Sciatic nerve (tissue), 2 donors: ENCODE measurements at regions of chr7 and their contacts with region 1.

Region 1: DNA sequence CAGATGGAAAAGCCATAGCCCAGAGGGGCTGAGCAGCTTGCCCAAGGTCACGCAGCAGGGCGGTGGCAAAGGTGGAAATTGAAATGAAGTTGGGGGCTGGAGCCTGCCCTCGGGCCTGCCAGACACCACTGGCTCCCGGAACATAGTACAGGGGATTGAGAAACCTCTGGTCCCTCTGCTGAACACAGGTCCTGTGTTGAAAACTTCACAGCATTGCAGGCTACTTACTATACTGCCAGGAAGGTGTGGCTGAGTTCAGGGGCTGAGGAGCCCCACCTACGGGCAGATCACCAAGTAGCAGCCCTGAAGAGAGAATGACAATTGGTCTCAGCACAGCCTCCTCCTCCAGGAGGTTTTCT is 326.7 kb downstream of the PLXNA4 start:
- DNase-seq: no peak
- ATAC-seq: no peak

Region 2: GRCh38 chr7:131967216-131967730 is 282.3 kb before region 1 on chr7:
- intact Hi-C with region 1: loop called (anchors 5 kb)
- DNase-seq: no peak
- ATAC-seq: no peak

Region 3: GRCh38 chr7:132065193-132065988 is 184.2 kb before region 1 on chr7:
- intact Hi-C with region 1: no loop called
- DNase-seq: no peak
- ATAC-seq: peak; percentile 82

Region 4: DNA sequence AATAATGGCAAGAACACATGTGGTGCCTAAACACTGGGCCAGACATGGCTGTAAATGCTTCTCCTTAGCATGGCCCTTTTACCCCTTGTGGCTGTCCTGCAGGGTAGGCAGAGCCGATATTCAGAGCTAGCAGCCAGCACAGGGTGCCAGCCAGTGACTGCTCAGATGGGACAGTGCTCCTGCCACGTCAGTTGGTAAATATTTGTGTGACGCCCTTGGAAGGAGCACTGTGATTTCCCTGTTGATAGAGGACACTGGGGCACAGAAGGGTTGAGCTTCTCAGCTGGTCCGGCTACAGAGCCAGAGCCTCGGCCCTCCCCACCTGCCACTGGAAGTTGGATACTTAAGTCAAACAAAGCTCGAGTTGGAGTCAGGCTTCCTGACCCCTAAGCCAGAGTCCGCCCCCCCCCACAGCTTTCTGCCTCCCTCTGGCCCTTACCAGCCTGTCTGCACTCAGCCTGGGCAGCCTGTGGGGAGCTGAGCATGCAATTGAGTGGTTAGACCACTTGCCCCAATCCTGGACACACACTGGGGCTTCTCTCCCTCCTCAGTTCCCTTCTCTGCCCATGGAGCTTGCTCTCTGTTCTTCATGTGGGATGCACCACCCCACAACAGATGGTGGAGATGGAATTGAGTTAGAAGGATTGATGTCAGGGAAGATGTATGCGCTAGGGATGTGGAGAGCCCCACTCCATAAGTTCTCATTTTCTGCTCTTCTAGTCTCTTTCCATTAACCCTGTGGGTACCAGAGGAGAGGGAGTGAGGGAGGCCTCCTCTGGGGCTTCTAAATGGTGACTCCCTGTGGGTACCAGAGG is 24.2 kb before region 1 on chr7:
- intact Hi-C with region 1: no loop called
- DNase-seq: no peak
- ATAC-seq: no peak

Region 5: GRCh38 chr7:132919771-132920170 is 670.2 kb after region 1 on chr7:
- intact Hi-C with region 1: no loop called
- DNase-seq: no peak
- ATAC-seq: no peak

Region 6: DNA sequence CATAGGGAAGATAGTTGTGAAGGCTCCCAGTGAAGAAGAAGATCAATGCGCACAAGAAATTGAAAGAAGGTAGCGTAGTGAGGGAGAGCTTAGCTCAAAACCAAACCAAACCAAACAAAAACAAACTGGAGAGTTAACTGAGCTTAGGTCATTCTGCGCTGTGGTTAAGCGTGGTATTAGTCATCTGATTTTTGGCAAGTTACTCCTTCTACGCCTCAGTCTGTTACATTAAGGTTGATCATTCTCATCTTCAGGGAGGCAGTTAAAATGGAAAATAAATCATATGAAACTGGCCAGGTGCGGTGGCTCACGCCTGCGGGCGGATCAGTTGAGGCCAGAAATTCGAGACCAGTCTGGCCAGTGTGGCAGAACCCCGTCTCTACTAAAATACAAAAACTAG is 1263.0 kb after region 1 on chr7:
- intact Hi-C with region 1: no loop called
- DNase-seq: no peak
- ATAC-seq: no peak